PC-3 (cell line): ENCODE measurements at regions of chr3 and their contacts with region 1.

Region 1: DNA sequence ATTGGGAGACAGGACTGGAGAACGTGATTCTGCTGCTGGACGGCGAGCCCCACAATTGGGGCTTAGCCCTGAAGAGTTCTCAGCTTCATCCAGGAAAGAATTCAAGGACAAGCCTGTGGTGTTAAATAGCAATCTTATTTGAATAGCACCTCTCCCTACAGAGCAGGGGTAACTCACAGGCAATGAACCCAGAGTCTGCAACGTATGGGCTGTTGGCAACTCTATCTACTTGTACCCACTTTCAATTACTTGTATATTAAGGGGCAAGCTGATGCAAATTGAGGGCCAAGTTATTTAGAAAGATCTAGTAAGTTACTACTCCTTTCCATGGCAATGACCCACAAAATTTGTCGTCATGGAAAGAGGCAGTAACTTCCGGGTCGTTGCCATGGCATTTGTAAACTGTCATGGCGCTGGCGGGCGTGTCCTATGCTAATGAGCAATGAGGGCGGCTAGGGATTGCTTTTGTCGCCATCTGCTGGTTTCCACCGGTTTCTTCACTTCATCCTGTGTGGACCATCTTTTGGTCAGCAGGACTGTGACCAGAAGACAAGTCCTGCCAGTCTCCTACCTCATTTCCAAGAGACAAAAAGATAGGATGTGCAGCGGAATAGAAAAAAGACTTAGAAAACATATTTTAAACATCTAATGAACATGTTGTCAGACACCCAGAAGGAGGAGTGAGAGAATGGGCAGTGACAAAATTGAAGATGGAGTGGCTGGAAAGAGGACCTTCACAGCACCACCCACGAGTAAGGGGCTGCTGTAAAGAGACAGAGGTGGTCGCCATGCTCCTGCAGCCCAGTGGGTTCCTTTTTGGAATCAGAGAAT is 45.8 kb upstream of the SH3BP5 start:
- DNase-seq: peak; percentile 97
- ATAC-seq: peak; percentile 98
- H3K4me3 ChIP-seq: no peak overlapping the region
- H3K27ac ChIP-seq: 0 out of 2 replicates have a peak overlapping the region, but pooled peaks have one; percentile 6
- H3K4me1 ChIP-seq: no peaks in the 10 kb centered on the region
- H3K27me3 ChIP-seq: no peaks in the 10 kb centered on the region
- CTCF ChIP-seq: peak; percentile 92

Region 2: DNA sequence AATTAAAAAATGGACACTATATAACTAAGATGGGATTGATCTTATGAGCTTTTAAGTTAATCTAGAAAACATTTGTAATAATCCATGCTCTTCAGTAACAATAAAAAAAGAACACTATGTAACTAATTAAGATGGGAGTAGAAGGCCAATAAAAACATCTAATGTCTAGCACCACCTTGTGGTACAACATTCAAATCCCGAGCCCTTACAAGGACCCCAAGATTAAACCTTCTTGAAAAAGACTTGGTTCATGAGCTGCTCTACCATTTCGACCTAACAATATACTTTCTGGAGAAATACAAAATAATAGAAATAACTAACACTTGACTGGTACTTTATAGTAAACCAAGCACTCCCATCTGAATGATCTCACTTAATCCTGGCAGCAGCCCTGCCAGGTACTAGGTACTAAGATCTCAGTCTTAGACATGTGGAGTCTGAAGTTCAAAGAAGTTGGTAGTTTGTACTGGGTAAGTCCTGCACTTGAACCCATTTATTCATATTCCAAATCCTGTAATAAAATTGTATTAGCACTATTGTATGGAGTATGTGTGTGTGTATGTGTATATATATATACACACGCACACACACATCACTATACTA is 27.4 kb after region 1 on chr3:
- CTCF ChIA-PET with region 1: interaction called, 3 read pairs
- POLR2A ChIA-PET with region 1: no interaction called
- intact Hi-C with region 1: loop called (anchors 1 kb)
- DNase-seq: peak; percentile 72
- ATAC-seq: peak; percentile 77
- H3K4me3 ChIP-seq: no peak overlapping the region
- H3K27ac ChIP-seq: no peak overlapping the region
- H3K4me1 ChIP-seq: peaks cover 8% of the 10 kb centered on the region
- H3K27me3 ChIP-seq: no peaks in the 10 kb centered on the region
- CTCF ChIP-seq: peak; percentile 93

Region 3: GRCh38 chr3:15427182-15427880 is 49.2 kb after region 1 on chr3 and contains the starts of genes EAF1 and METTL6:
- CTCF ChIA-PET with region 1: no interaction called
- POLR2A ChIA-PET with region 1: no interaction called
- intact Hi-C with region 1: no loop called
- DNase-seq: peak; percentile 84
- ATAC-seq: peak; percentile 89
- H3K4me3 ChIP-seq: peak within 1 kb of the TSS; percentile 100
- H3K27ac ChIP-seq: peak within 1 kb of the TSS; percentile 54
- H3K4me1 ChIP-seq: peaks cover 20% of the 10 kb centered on the region
- H3K27me3 ChIP-seq: no peaks in the 10 kb centered on the region
- CTCF ChIP-seq: no peak
- total RNA-seq, gene EAF1: 28.6 and 35.3 TPM in 2 replicates
- total RNA-seq, gene METTL6: 22.4 and 27.5 TPM in 2 replicates